ENCODE measurements at regions of chr2 and their contacts with region 1.

Region 1: DNA sequence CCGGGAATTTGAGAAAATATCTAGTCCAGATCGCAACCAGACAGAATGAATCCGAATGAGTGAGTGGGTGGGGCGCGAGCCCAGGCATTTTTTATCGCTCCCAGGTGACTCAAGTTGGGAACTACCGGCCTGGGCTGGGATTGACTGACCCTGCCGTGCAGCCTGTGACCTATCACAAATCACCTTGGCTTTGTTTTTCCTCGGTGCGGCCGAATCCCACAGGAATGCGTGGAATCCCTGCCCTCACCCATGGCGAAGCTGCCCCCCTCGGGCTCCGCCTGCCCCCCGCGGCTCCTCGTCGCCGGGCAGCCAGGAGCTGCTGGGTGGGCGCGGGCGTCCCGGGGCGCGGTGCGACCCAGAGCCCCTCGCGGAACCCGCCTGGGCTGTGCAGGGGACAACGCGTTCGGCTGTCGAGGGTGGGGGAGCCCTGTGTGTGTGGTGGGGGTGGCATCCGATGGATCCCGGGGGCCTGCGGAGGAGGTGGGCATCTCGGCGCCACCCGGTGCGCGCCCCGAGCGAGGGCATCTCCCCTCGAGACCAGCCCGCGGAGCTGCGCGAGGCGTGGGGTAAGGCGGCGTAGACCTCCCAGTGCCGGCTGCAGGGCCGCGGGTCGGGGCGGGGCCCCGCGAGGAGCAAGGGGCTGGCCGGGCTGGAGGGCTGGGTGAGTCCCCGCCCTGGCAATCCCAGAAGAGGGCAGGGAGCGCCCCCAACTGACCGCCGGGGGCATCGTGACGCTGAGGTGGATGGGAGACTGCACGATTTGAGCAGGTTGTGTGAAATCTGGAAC is 16.5 kb downstream of the B3GNT7 start:
- DNase-seq: peak; percentile 85 to 86
- ATAC-seq: peak; percentile 92 to 98 (median 97)
- H3K4me3 ChIP-seq: peak overlapping the region; percentile 66
- H3K27ac ChIP-seq: no peak overlapping the region
- H3K4me1 ChIP-seq: peaks cover 6% of the 10 kb centered on the region
- H3K27me3 ChIP-seq: peaks cover 0 to 12% (median 1%) of the 10 kb centered on the region in 3 donors
- CTCF ChIP-seq: peak; percentile 79

Region 2: DNA sequence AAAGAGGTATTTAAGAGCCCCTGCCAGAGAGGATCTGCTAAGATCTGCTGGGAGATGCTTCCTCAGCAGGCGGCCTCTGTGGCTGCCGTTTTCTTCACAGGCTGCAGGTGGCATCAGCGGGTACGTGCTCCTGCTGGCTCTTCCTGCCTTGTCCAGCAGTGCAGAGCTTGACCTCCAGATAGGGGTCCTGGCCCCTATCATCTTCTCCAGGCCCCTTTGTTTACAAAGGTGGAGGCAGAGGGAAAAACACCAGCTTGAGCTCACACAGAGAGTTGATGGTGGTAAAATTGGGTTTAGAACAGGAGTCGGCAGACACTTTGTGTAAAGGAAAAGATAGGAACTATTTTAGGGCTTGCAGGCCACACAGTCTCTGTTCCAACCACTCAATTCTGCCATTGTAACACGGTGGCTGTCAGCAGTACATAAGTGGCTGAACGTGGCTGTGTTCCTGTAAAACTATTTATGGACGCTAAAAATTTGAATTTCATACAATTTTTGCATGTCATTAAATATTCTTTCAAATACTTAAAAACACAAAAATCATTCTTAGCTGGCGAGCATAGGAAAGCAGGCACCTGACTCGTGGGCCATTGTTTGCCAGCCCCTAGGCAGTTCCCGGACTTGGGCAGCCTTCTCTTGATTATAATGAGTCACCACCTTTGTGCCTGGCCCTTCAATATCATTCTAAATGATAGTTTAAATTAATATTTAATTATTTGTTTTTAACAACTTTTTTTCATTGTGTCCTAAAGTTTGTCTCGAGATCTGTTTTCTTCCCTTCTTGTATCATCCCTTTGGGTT is 114.7 kb before region 1 on chr2:
- intact Hi-C with region 1: loop called (anchors 5 kb)
- DNase-seq: peak; percentile 34 to 64
- ATAC-seq: peak; percentile 45 to 69 (median 50)
- H3K4me3 ChIP-seq: no peak overlapping the region
- H3K27ac ChIP-seq: no peak overlapping the region
- H3K4me1 ChIP-seq: no peaks in the 10 kb centered on the region
- H3K27me3 ChIP-seq: no peaks in the 10 kb centered on the region
- CTCF ChIP-seq: peak; percentile 49

Region 3: DNA sequence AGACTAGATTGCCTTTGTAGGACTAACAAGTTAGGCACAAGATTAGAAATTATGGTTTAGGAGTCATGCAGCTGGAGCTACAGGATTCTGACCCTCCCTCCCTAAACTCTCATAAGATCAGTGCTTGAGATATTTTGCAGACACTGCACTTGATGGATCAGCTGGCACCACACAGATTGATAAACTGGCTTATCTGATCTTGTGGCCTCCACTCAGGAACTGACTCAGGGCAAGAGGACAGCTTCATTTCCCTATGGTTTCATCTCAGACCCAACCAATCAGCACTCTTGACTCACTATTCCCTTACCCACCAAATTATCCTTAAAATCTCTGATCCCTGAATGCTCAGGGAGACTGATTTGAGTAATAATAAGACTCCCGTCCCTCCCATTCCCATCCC is 701.8 kb after region 1 on chr2:
- intact Hi-C with region 1: no loop called
- DNase-seq: no peak
- ATAC-seq: no peak
- H3K4me3 ChIP-seq: no peak overlapping the region
- H3K27ac ChIP-seq: no peak overlapping the region
- H3K4me1 ChIP-seq: peaks cover 3% of the 10 kb centered on the region
- H3K27me3 ChIP-seq: no peaks in the 10 kb centered on the region
- CTCF ChIP-seq: no peak